ENCODE measurements at regions of chr1 and their contacts with region 1.

Region 1: GRCh38 chr1:68331117-68331865 is 99.0 kb upstream of the WLS start:
- DNase-seq: no peak

Region 2: GRCh38 chr1:67861856-67862516 is 469.3 kb before region 1 on chr1:
- intact Hi-C with region 1: loop called in 1 of 2 experiments (anchors 10 kb)
- DNase-seq: no peak

Region 3: DNA sequence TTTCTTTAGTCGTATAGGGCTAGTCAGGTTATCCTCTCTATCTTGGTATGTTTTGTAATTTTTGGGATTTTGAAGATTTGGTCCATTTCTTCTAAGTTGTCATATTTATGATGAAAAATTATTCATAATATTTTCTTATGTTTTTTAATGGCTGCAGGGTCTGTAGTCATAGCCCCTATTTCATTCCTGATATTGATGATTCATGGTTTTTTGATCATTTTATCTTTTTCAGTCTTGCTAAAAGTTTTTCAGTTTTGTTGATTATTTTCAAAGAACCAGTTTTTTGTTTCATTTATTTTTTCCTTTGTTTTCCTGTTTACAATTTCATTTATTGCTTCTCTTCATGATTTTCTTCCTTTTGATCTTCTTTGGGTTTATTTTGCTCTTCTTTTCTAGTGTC is 331.1 kb before region 1 on chr1:
- intact Hi-C with region 1: loop called in 1 of 2 experiments (anchors 10 kb)
- DNase-seq: no peak

Region 4: DNA sequence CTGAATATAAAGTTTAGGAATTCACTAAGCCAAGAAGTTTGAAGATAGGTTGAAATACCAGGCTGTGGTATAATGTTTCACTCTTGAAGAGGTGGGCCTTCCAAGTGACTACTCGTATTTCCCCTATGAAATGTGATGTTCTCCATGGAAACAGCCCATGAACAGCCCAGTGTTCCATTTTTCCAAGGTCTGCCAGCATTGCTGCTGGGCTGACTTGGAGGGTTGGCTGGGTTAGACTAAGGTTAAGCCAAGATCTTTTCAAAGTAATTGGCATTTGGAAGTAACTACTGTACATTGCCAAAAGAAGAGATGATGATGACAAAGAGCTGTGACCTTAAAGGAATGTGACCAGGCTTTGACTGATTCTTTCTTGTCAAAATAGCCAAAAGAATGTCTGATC is 44.6 kb after region 1 on chr1:
- intact Hi-C with region 1: no loop called
- DNase-seq: no peak

Measured in posterior vena cava (tissue), 2 donors.